Dorsolateral prefrontal cortex (tissue), 120 donors: ENCODE measurements at regions of chr1 and their contacts with region 1.

Region 1: GRCh38 chr1:34852677-34853217 is 6.8 kb downstream of the SMIM12 start:
- DNase-seq: peak; percentile 86 to 97 (median 92)
- H3K4me3 ChIP-seq: peak overlapping the region in 6 of 59 donors; percentile 6 to 19 (median 15)
- H3K27ac ChIP-seq: peak overlapping the region in 47 of 59 donors; percentile 1 to 74 (median 55)
- H3K27me3 ChIP-seq: no peaks in the 10 kb centered on the region
- CTCF ChIP-seq: peak; percentile 91 to 100 (median 99)

Region 2: DNA sequence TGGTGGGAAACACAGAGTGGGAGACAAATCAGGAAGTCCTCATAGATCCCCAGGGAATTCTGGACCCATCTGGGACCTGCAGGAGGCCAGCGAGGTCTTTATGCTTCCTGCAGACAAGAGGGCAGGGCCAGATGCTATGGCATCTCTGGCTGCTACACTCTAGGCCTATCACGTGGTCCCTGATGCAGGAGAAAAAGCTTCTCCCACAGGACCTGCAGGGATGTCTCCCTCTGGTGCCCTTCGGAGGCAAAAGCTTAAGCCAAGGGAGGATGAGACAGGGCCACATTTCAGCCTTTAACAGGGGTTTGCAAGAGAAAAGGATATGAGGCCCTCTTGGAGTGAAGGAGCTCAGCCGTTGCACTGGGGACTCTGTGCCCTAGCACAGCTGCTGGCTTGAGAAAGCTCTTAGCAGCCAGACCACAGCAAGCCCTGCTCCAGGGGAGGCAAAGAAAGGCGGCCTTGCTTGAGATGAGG is 433.0 kb before region 1 on chr1:
- intact Hi-C with region 1: no loop called
- DNase-seq: no peak
- H3K4me3 ChIP-seq: no peak overlapping the region
- H3K27ac ChIP-seq: no peak overlapping the region
- H3K27me3 ChIP-seq: peaks cover 0 to 10% (median 0%) of the 10 kb centered on the region in 45 donors
- CTCF ChIP-seq: peak in 3 of 56 donors; percentile 10 to 24 (median 17)

Region 3: GRCh38 chr1:34786521-34787325 is 66.0 kb before region 1 on chr1:
- intact Hi-C with region 1: loop called (anchors 1 to 2 kb)
- DNase-seq: peak; percentile 68 to 88 (median 82)
- H3K4me3 ChIP-seq: no peak overlapping the region
- H3K27ac ChIP-seq: peak overlapping the region in 13 of 59 donors; percentile 10 to 60 (median 33)
- H3K27me3 ChIP-seq: peaks cover 0 to 19% (median 9%) of the 10 kb centered on the region in 45 donors
- CTCF ChIP-seq: peak; percentile 67 to 95 (median 88)

Region 4: GRCh38 chr1:35180776-35181374 is 328.1 kb after region 1 on chr1:
- intact Hi-C with region 1: loop called in 1 of 2 experiments (anchors 10 kb)
- DNase-seq: no peak
- H3K4me3 ChIP-seq: peak overlapping the region in 3 of 59 donors; percentile 3 to 9 (median 5)
- H3K27ac ChIP-seq: no peak overlapping the region
- H3K27me3 ChIP-seq: no peaks in the 10 kb centered on the region
- CTCF ChIP-seq: no peak